ENCODE measurements at regions of chr6 and their contacts with region 1.

Region 1: DNA sequence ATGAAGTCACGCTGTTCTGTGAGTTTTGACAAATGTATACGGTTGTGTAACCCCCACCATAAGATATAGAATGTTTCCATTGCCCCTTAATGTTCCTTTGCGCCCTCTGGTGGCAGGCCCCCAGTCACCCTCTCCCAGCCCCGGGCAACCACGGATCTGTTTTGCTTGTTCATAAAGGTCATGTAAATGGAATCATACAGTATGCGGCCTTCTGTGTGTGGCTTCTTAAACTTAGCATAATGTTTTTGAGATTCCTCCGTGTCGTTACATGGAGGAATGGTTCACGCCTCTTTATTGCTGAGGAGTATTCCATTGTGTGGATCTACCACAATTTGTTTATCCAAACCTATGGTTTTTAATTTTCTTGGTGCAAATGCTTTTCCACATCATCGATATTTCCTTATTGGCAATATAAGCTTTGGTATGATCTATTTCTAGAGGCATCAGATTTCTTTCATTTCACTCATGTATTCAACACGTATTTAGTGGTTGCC is 28.4 kb downstream of the LYRM2 start:
- DNase-seq: peak; percentile 74 to 78
- H3K4me3 ChIP-seq: no peak overlapping the region
- H3K27ac ChIP-seq: no peak overlapping the region
- H3K4me1 ChIP-seq: no peaks in the 10 kb centered on the region
- H3K27me3 ChIP-seq: no peaks in the 10 kb centered on the region
- CTCF ChIP-seq: peak; percentile 74 to 75

Region 2: GRCh38 chr6:89098461-89098860 is 511.7 kb before region 1 on chr6:
- intact Hi-C with region 1: no loop called
- DNase-seq: no peak
- H3K4me3 ChIP-seq: no peak overlapping the region
- H3K27ac ChIP-seq: no peak overlapping the region
- H3K4me1 ChIP-seq: peaks cover 0 to 14% (median 0%) of the 10 kb centered on the region in 4 donors
- H3K27me3 ChIP-seq: no peaks in the 10 kb centered on the region
- CTCF ChIP-seq: no peak

Region 3: GRCh38 chr6:89432875-89433251 is 177.3 kb before region 1 on chr6 and contains the start of gene ANKRD6:
- intact Hi-C with region 1: loop called (anchors 1 kb)
- DNase-seq: peak; percentile 76 to 81
- H3K4me3 ChIP-seq: peak within 1 kb of the TSS; percentile 76 to 94
- H3K27ac ChIP-seq: peak within 1 kb of the TSS; percentile 76 to 79
- H3K4me1 ChIP-seq: peaks cover 0 to 23% (median 9%) of the 10 kb centered on the region in 4 donors
- H3K27me3 ChIP-seq: no peaks in the 10 kb centered on the region
- CTCF ChIP-seq: peak; percentile 83 to 98

Region 4: DNA sequence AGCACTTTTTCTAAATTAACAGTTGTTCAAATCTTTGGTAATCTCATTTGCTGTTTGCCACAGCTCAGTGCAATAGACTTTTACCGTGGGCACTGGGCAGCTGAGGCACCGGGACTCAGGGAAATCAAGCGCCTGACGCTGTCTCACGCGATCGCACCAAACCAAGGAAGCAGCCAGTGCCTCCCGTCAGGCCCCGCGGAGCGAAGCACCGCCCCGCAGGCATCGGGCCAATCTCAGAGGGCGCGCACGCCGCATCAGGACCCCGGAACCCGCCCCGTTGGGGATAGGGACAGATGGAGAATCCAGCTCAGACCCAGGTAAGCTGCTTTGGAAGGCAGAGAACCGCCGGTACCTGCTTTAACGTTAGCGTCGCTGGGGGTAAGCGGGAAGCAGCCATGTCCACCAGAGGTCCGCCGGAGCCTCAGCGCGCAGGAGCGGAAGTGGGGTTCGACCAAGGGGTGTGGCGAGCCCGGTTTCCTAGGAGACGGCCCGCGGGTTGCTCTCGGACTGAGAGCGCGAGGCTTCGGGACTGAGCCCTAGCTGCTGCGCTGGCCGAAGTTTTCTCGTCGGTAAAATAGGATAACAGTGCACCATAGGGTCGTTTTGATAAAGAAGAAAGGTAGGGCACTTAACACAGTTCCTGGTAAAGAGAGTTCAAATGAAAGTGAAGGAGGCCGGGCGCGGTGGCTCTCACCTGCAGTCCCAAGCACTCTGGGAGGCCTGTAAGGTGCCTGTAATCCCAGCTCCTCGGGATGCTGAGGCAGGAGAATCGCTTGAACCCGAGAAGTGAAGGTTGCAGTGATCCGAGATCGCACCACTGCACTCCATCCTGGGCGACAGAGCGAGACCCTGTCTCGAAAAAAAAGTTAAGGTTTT is 28.4 kb after region 1 on chr6 and contains the start of gene LYRM2:
- intact Hi-C with region 1: no loop called
- DNase-seq: peak; percentile 93 to 98
- H3K4me3 ChIP-seq: peak within 1 kb of the TSS; percentile 59 to 62
- H3K27ac ChIP-seq: peak within 1 kb of the TSS; percentile 89 to 90
- H3K4me1 ChIP-seq: peaks cover 0 to 25% (median 8%) of the 10 kb centered on the region in 4 donors
- H3K27me3 ChIP-seq: no peaks in the 10 kb centered on the region
- CTCF ChIP-seq: peak; percentile 8 to 30

Measured in tibial artery (tissue), 4 donors.